ENCODE measurements at regions of chr16 and their contacts with region 1.

Region 1: GRCh38 chr16:2980227-2981086 is at the start of gene PKMYT1:
- DNase-seq: peak; percentile 94
- H3K4me3 ChIP-seq: peak within 1 kb of the TSS; percentile 65 to 90 (median 72)
- H3K27ac ChIP-seq: peak within 1 kb of the TSS; percentile 82 to 93 (median 87)
- H3K4me1 ChIP-seq: peaks cover 0 to 28% (median 24%) of the 10 kb centered on the region in 4 donors
- H3K27me3 ChIP-seq: peaks cover 7 to 28% (median 9%) of the 10 kb centered on the region in 3 donors
- CTCF ChIP-seq: no peak
- EP300 ChIP-seq: no peak
- POLR2A ChIP-seq: peak; percentile 93 to 95
- total RNA-seq, gene PKMYT1: 0.95 TPM in 1 of 4 donors, not detected in the others

Region 2: GRCh38 chr16:2926650-2927646 is 53.5 kb before region 1 on chr16:
- intact Hi-C with region 1: loop called (anchors 5 kb)
- DNase-seq: peak; percentile 95
- H3K4me3 ChIP-seq: peak overlapping the region in 2 of 4 donors; percentile 17 to 19
- H3K27ac ChIP-seq: peak overlapping the region in 2 of 4 donors; percentile 29 to 44
- H3K4me1 ChIP-seq: peaks cover 0 to 10% (median 9%) of the 10 kb centered on the region in 4 donors
- H3K27me3 ChIP-seq: no peaks in the 10 kb centered on the region
- CTCF ChIP-seq: peak; percentile 84 to 96 (median 94)
- EP300 ChIP-seq: no peak
- POLR2A ChIP-seq: no peak

Region 3: GRCh38 chr16:2968738-2969544 is 11.5 kb before region 1 on chr16 and contains the start of gene PAQR4:
- intact Hi-C with region 1: loop called (anchors 2 kb)
- DNase-seq: peak; percentile 89
- H3K4me3 ChIP-seq: peak within 1 kb of the TSS; percentile 33 to 82 (median 58)
- H3K27ac ChIP-seq: peak within 1 kb of the TSS; percentile 26 to 51 (median 37)
- H3K4me1 ChIP-seq: peaks cover 0 to 55% (median 46%) of the 10 kb centered on the region in 4 donors
- H3K27me3 ChIP-seq: peaks cover 43 to 69% (median 61%) of the 10 kb centered on the region in 3 donors
- CTCF ChIP-seq: no peak
- EP300 ChIP-seq: no peak
- POLR2A ChIP-seq: no peak
- total RNA-seq, gene PAQR4: 0.83 to 3.6 (median 1.0) TPM

Measured in sigmoid colon (tissue), 7 donors.